Posterior vena cava (tissue), 2 donors: ENCODE measurements at regions of chr7 and their contacts with region 1.

Region 1: GRCh38 chr7:136039577-136040345 is 62.6 kb upstream of the MTPN start:
- DNase-seq: no peak

Region 2: GRCh38 chr7:136617176-136617575 is 577.4 kb after region 1 on chr7:
- intact Hi-C with region 1: loop called in 1 of 2 experiments (anchors 10 kb)
- DNase-seq: no peak